ENCODE measurements at regions of chr15 and their contacts with region 1.

Region 1: GRCh38 chr15:96416934-96417759 is 86.6 kb downstream of the NR2F2 start:
- DNase-seq: peak; percentile 53
- H3K4me3 Mint-ChIP-seq: peak overlapping the region; percentile 70
- H3K27ac Mint-ChIP-seq: peak overlapping the region; percentile 78
- H3K4me1 Mint-ChIP-seq: peaks cover 68% of the 10 kb centered on the region
- H3K27me3 Mint-ChIP-seq: no peaks in the 10 kb centered on the region
- CTCF ChIP-seq: no peak

Region 2: GRCh38 chr15:96345560-96346399 is 71.4 kb before region 1 on chr15:
- CTCF ChIA-PET with region 1: no interaction called
- intact Hi-C with region 1: no loop called
- DNase-seq: peak; percentile 80
- H3K4me3 Mint-ChIP-seq: no peak overlapping the region
- H3K27ac Mint-ChIP-seq: no peak overlapping the region
- H3K4me1 Mint-ChIP-seq: peaks cover 70% of the 10 kb centered on the region
- H3K27me3 Mint-ChIP-seq: no peaks in the 10 kb centered on the region
- CTCF ChIP-seq: peak; percentile 66

Region 3: GRCh38 chr15:96457852-96458251 is 40.7 kb after region 1 on chr15:
- CTCF ChIA-PET with region 1: interaction called, 8 read pairs
- intact Hi-C with region 1: loop called (anchors 5 kb)
- DNase-seq: no peak
- H3K4me3 Mint-ChIP-seq: peak overlapping the region; percentile 6
- H3K27ac Mint-ChIP-seq: peak overlapping the region; percentile 1
- H3K4me1 Mint-ChIP-seq: peaks cover 29% of the 10 kb centered on the region
- H3K27me3 Mint-ChIP-seq: no peaks in the 10 kb centered on the region
- CTCF ChIP-seq: no peak

Region 4: GRCh38 chr15:96514607-96515285 is 97.6 kb after region 1 on chr15:
- CTCF ChIA-PET with region 1: no interaction called
- intact Hi-C with region 1: loop called (anchors 5 kb)
- DNase-seq: peak; percentile 13
- H3K4me3 Mint-ChIP-seq: no peak overlapping the region
- H3K27ac Mint-ChIP-seq: peak overlapping the region; percentile 28
- H3K4me1 Mint-ChIP-seq: peaks cover 23% of the 10 kb centered on the region
- H3K27me3 Mint-ChIP-seq: no peaks in the 10 kb centered on the region
- CTCF ChIP-seq: no peak

Region 5: DNA sequence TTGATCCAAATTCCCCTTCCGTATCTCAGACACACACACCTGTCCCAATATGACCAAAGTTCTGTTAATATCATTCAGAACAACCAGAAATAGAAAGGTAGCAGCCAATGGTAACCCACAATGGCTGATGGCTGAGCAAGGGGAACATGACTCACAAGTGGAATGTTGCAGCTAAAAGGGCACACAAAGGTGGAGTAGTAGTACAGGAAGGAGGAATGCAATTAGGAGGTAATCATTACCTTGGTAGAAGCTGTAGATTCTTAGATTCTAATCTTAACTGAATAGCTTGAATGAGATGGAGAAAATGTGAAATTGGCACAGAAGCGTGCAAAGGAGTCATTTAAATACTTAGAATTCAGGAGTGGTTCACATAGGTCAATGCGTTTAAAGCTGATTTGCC is 261.2 kb after region 1 on chr15:
- CTCF ChIA-PET with region 1: no interaction called
- intact Hi-C with region 1: loop called (anchors 5 kb)
- DNase-seq: peak; percentile 72
- H3K4me3 Mint-ChIP-seq: no peak overlapping the region
- H3K27ac Mint-ChIP-seq: peak overlapping the region; percentile 62
- H3K4me1 Mint-ChIP-seq: peaks cover 19% of the 10 kb centered on the region
- H3K27me3 Mint-ChIP-seq: no peaks in the 10 kb centered on the region
- CTCF ChIP-seq: no peak

Region 6: DNA sequence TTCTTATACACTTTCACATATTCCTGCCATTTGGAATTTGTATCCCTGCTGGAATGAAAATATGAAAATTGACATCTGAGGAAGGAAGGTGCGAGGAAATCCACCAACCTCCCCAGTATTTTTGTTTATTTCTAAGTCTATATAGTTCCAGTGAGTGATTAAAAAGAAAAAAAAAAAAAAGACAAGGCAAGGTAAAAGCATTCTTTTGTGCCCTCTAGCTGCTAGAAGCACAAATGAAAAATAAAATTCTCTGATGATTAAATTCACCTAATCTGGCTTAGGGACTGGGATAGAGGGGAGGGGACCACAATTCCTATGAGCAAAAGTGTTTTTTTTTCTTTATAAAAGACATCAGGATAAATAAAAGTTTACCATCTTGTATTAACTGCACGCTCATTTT is 284.3 kb after region 1 on chr15:
- CTCF ChIA-PET with region 1: no interaction called
- intact Hi-C with region 1: loop called (anchors 5 kb)
- DNase-seq: no peak
- H3K4me3 Mint-ChIP-seq: no peak overlapping the region
- H3K27ac Mint-ChIP-seq: no peak overlapping the region
- H3K4me1 Mint-ChIP-seq: peaks cover 29% of the 10 kb centered on the region
- H3K27me3 Mint-ChIP-seq: no peaks in the 10 kb centered on the region
- CTCF ChIP-seq: no peak